ENCODE measurements at regions of chr17 and their contacts with region 1.

Region 1: DNA sequence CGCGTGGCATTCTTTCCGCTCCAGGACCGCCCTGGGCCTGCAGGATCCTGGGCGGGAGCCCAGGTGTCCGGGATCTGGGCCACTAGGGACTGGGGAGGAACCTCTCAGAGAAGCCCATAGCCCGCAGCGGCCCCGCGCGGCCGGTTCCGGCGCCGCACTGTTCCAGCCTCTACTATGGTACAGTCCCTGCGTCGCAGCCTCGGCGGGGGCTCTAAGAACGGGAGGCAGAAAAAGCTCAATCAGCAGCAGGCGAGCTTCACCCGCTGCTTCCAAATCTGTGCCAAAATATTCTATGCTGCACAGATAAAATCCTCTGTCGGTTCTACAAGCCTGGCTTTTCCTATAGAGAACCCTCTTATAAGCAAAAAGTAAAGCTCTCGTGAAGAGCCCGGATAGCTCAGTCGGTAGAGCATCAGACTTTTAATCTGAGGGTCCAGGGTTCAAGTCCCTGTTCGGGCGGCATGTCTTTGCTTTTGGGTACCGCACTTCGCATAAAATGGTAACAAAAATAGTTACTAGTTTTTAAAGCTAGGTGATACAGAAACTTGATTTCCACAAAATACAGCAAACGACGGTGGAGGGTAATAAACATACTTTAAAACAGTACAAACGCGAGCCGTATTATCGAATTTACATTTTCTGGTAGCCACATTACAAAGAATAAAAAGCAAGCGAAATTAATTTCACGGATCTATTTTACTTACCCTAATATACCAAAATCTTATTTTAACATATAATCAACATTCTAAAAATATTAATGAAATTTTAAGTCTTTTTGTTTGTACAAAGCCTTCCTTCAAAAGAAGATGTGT is 661 bp upstream of the ALOXE3 start:
- DNase-seq: peak; percentile 95
- H3K4me3 Mint-ChIP-seq: peak overlapping the region; percentile 91
- H3K27ac Mint-ChIP-seq: peak overlapping the region; percentile 92
- H3K4me1 Mint-ChIP-seq: peaks cover 51% of the 10 kb centered on the region
- H3K27me3 Mint-ChIP-seq: peaks cover 61% of the 10 kb centered on the region

Region 2: GRCh38 chr17:7844292-7845154 is 274.5 kb before region 1 on chr17:
- intact Hi-C with region 1: loop called (anchors 5 kb)
- DNase-seq: peak; percentile 96
- H3K4me3 Mint-ChIP-seq: peak overlapping the region; percentile 99
- H3K27ac Mint-ChIP-seq: peak overlapping the region; percentile 100
- H3K4me1 Mint-ChIP-seq: peaks cover 37% of the 10 kb centered on the region
- H3K27me3 Mint-ChIP-seq: peaks cover 2% of the 10 kb centered on the region

Region 3: GRCh38 chr17:8057691-8058114 is 61.3 kb before region 1 on chr17:
- intact Hi-C with region 1: loop called (anchors 2 kb)
- DNase-seq: peak; percentile 84
- H3K4me3 Mint-ChIP-seq: no peak overlapping the region
- H3K27ac Mint-ChIP-seq: no peak overlapping the region
- H3K4me1 Mint-ChIP-seq: peaks cover 15% of the 10 kb centered on the region
- H3K27me3 Mint-ChIP-seq: peaks cover 55% of the 10 kb centered on the region

Region 4: DNA sequence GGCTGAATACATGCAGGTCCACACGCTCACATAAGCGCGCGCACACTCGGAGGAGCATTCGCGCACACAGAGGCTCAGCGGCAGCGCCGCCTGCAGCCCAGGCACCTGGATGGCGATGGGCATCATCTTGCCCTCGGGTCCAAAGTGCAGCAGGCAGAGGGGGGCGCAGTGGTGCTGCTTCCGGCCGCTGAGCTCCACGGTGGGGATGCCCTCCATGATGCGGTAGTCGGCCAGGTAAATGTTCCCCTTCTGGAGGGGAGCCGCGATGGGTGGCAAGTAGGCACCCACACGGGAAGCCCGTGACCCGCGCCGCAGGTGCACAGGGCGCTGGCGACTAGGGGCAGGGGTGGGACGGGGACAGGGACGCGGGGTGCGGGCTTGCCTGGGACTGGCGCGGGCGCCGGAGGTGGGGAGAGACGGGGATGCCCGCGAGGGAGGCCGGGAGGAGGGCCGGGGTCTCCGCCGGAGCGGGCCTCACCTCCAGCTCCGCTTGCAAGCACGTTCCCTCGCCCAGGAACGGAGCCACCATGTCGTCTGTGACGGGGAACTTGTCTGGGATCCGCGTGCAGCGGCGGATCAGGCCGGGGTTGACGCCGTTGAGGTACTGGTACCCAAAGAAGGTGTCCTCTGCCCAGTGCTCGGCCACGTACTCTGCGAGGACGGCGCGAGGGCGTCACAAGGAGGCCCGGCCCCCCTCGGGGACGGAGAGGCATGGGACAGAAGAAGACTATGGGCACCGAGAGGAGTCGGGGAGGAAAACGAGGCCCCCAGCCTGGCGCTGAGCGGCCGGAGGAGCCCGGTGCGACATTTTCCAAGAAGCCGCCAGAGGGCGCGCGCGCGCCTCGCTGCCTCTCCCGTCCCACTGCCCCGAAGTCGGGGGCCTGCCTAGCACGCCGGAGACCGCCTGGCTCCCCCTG is 39.4 kb before region 1 on chr17:
- intact Hi-C with region 1: loop called (anchors 1 kb)
- DNase-seq: peak; percentile 93
- H3K4me3 Mint-ChIP-seq: peak overlapping the region; percentile 85
- H3K27ac Mint-ChIP-seq: peak overlapping the region; percentile 86
- H3K4me1 Mint-ChIP-seq: peaks cover 9% of the 10 kb centered on the region
- H3K27me3 Mint-ChIP-seq: peaks cover 17% of the 10 kb centered on the region

Region 5: DNA sequence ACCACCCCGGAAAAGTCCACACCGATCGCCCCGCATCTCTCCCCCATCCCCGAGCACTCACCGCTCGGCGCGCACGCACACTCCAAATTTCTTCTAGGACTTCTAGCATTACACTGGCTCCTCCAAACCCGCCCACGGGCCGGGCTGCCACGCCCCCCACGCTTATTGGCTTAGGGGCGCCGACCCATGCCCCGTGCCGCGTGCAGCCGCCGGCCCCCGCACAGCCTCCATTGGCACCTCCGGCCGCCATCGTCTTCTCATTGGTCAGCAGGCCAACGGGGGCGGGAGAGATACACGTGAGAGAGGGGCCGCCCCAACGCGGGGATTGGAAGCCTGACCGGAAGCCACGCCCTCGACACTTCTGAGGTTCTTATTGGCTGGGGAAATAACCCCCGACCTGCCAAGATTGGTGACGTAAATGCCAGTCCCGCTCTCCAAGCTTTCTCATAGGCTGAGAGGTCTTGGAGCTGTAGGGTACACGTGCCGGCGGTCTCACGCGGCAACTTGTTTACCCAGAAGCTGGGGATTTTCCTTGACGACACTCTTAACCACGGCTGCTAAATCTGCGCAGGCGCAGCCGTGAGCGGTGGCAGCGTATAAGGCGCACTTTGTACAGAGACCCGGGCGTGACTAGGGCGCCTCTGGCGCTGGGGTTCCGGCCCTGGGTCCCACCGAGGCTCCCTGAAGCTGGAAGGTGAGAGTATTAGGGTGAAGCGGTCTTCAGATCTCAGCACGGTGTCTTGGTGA is 37.4 kb after region 1 on chr17:
- intact Hi-C with region 1: loop called (anchors 1 kb)
- DNase-seq: peak; percentile 100
- H3K4me3 Mint-ChIP-seq: no peak overlapping the region
- H3K27ac Mint-ChIP-seq: no peak overlapping the region
- H3K4me1 Mint-ChIP-seq: peaks cover 62% of the 10 kb centered on the region
- H3K27me3 Mint-ChIP-seq: no peaks in the 10 kb centered on the region

Region 6: GRCh38 chr17:8222630-8223356 is 103.8 kb after region 1 on chr17:
- intact Hi-C with region 1: loop called (anchors 1 kb)
- DNase-seq: peak; percentile 96
- H3K4me3 Mint-ChIP-seq: peak overlapping the region; percentile 98
- H3K27ac Mint-ChIP-seq: peak overlapping the region; percentile 93
- H3K4me1 Mint-ChIP-seq: peaks cover 60% of the 10 kb centered on the region
- H3K27me3 Mint-ChIP-seq: peaks cover 7% of the 10 kb centered on the region

Region 7: GRCh38 chr17:8275421-8276290 is 156.7 kb after region 1 on chr17:
- intact Hi-C with region 1: no loop called
- DNase-seq: no peak
- H3K4me3 Mint-ChIP-seq: no peak overlapping the region
- H3K27ac Mint-ChIP-seq: no peak overlapping the region
- H3K4me1 Mint-ChIP-seq: peaks cover 2% of the 10 kb centered on the region
- H3K27me3 Mint-ChIP-seq: no peaks in the 10 kb centered on the region

Region 8: GRCh38 chr17:8294814-8295316 is 175.9 kb after region 1 on chr17:
- intact Hi-C with region 1: loop called (anchors 2 kb)
- DNase-seq: no peak
- H3K4me3 Mint-ChIP-seq: peak overlapping the region; percentile 83
- H3K27ac Mint-ChIP-seq: peak overlapping the region; percentile 90
- H3K4me1 Mint-ChIP-seq: peaks cover 34% of the 10 kb centered on the region
- H3K27me3 Mint-ChIP-seq: no peaks in the 10 kb centered on the region

Measured in activated CD4-positive, alpha-beta T cell treated with anti-CD3 and anti-CD28 coated beads, Interleukin-2, amount 10 ng/mL, durations not matched to agents 24 days and 14 days (primary cell).